Sigmoid colon (tissue), 7 donors: ENCODE measurements at regions of chr18 and their contacts with region 1.

Region 1: DNA sequence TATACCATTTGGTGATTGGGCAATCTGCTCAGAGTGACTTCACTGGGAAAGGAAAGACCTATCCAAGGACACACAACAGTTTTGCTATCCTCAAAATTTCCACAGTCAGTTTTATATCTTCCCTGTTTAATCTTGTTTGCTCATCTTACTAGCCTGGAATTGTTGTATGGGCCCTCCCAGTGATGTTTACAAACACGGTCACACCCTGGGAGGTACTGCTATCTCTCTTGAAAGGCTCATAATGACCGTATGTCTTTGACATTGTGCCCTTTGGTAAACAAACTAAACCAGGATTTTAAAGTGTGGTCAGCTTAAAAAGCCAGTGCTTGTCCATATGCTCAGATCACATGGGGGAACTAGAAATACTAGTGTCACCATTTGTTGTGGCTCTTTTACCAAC is 277.0 kb downstream of the CDH2 start:
- DNase-seq: no peak
- H3K4me3 ChIP-seq: no peak overlapping the region
- H3K27ac ChIP-seq: no peak overlapping the region
- H3K4me1 ChIP-seq: no peaks in the 10 kb centered on the region
- H3K27me3 ChIP-seq: no peaks in the 10 kb centered on the region
- CTCF ChIP-seq: no peak
- EP300 ChIP-seq: no peak
- POLR2A ChIP-seq: no peak

Region 2: GRCh38 chr18:27473318-27473717 is 426.6 kb before region 1 on chr18:
- intact Hi-C with region 1: loop called (anchors 10 kb)
- DNase-seq: no peak
- H3K4me3 ChIP-seq: no peak overlapping the region
- H3K27ac ChIP-seq: no peak overlapping the region
- H3K4me1 ChIP-seq: no peaks in the 10 kb centered on the region
- H3K27me3 ChIP-seq: no peaks in the 10 kb centered on the region
- CTCF ChIP-seq: no peak
- EP300 ChIP-seq: no peak
- POLR2A ChIP-seq: no peak